ENCODE measurements at regions of chr1 and their contacts with region 1.

Region 1: GRCh38 chr1:61077676-61078541 is 4.5 kb upstream of the NFIA start:
- DNase-seq: peak; percentile 90 to 98 (median 96)
- ATAC-seq: peak; percentile 82 to 86 (median 84)
- H3K4me3 ChIP-seq: peak overlapping the region; percentile 44 to 81 (median 64)
- H3K27ac ChIP-seq: peak overlapping the region; percentile 75 to 98 (median 94)
- H3K4me1 ChIP-seq: peaks cover 12 to 47% (median 38%) of the 10 kb centered on the region in 12 donors
- H3K27me3 ChIP-seq: no peaks in the 10 kb centered on the region
- CTCF ChIP-seq: peak in 2 of 12 donors; percentile 8 to 15
- POLR2A ChIP-seq: peak in 1 of 2 donors; percentile 31

Region 2: DNA sequence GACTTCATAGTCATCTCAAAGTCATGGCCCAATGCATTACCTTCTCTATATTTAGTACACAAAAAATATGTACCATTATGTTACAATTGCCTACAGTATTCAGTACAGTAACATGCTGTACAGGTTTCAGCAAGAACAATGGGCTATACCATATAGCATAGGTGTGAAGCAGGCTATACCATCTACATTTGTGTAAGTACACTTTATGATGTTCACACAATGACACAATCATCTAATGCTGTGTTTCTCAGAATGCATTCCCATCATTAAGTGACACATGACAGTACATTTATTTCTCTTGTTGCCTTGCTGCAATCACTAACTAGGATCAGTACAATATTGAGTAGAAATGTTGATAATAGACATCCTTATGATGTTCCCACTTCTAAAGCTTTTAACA is 42.0 kb before region 1 on chr1:
- intact Hi-C with region 1: no loop called
- DNase-seq: no peak
- ATAC-seq: no peak
- H3K4me3 ChIP-seq: no peak overlapping the region
- H3K27ac ChIP-seq: no peak overlapping the region
- H3K4me1 ChIP-seq: no peaks in the 10 kb centered on the region
- H3K27me3 ChIP-seq: no peaks in the 10 kb centered on the region
- CTCF ChIP-seq: no peak
- POLR2A ChIP-seq: no peak

Region 3: DNA sequence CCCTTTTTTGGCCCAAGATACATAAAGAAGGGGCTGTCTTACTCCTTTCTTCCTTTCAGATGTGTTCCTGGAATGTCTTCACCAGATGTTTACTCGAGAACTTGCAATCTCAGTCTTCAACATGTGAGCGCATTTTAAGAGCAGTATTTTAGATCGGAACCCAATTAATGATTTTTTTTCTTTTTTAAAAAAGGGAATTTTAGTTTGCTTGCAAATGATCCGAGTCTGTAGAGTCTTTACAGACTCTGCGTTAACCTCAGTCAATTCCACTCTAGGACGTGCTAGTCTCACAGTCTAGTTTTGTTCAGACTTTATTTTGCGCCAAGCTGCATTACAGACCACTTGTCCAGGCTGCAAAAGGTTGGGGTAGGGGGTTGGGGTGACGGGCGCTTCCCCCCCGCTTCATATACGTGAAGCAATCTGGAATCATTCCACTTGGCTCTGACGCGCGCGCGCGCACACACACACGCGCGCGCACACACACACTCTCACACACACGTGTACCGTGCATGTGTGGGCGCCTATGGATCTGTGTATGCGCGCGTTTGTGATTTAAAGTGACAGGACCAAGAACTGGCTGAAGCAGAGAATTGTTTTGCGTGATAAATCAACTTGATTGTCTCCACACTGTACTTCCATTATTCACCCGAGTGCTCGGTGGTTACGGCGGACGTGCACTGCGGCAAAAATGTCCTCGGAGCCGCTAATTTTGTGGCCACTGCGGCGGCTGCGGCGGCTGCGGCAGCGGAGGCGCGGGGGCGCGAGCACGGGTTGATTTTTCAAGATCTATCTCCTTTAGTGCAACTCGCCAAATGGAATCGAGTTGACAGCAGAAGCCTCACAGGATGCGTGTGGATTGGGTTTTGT is 21.1 kb before region 1 on chr1:
- intact Hi-C with region 1: loop called in 7 of 10 experiments (anchors 1 to 2 kb)
- DNase-seq: peak; percentile 55 to 78 (median 61)
- ATAC-seq: peak; percentile 30 to 69 (median 61)
- H3K4me3 ChIP-seq: peak overlapping the region; percentile 38 to 92 (median 72)
- H3K27ac ChIP-seq: peak overlapping the region; percentile 68 to 99 (median 92)
- H3K4me1 ChIP-seq: peaks cover 0 to 57% (median 34%) of the 10 kb centered on the region in 12 donors
- H3K27me3 ChIP-seq: peaks cover 0 to 5% (median 0%) of the 10 kb centered on the region in 9 donors
- CTCF ChIP-seq: no peak
- POLR2A ChIP-seq: no peak

Region 4: DNA sequence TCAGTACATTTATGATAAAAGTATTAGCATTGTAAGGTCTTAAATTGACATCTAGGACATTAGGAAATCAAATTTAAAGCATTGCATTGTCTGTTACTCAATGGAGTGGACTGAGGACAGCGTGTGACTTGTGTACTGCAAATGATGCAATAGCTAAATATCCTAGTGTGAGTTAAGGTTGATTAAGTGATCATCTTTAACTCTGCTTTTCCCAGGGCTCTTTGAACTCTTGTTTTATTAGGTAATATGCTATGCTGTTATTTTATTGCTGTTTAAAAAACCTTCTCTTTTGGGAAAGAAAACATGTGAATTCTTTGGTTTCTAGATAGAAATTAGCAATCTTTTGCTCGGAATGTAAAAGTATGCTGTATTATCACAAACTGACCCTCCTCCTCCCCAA is 43.1 kb after region 1 on chr1:
- intact Hi-C with region 1: loop called in 5 of 10 experiments (anchors 2 to 5 kb)
- DNase-seq: no peak
- ATAC-seq: peak; percentile 67 to 80 (median 77)
- H3K4me3 ChIP-seq: peak overlapping the region in 9 of 12 donors; percentile 20 to 45 (median 27)
- H3K27ac ChIP-seq: peak overlapping the region; percentile 24 to 78 (median 70)
- H3K4me1 ChIP-seq: peaks cover 14 to 95% (median 70%) of the 10 kb centered on the region in 12 donors
- H3K27me3 ChIP-seq: no peaks in the 10 kb centered on the region
- CTCF ChIP-seq: no peak
- POLR2A ChIP-seq: no peak

Region 5: DNA sequence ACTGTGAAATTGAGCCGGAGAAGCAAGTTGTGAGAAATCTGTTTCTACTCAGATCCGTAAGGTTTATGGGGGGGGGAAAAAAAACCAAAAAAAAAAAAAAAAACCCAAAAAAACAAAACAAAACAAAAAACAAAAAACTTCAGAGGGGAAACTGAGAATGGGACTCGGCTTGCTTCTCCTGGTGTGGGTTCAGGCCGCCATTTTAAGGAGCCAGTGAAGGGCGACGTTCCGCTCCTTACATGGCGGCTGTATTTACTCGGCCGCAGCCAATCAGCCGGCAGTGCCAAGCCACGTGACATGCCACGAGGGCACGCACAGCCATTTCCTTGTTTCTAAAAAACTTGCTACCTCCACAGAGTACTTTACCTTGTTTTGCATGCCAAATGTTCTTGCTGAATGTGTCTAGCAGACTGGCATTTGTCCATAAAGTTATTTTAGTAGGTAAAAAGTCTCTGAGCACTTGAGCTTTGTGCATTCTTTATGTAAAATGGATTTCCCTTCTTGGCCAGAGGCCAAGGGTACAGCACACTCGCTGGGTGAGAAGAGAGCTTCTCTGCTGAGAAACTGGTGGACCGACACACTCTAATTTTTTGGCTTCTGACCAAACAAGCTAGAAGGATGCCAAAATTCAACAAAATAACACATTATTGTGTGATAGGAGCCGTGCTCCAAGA is 106.3 kb after region 1 on chr1:
- intact Hi-C with region 1: loop called in 7 of 10 experiments (anchors 2 to 5 kb)
- DNase-seq: peak; percentile 92 to 96 (median 93)
- ATAC-seq: peak; percentile 92 to 96 (median 94)
- H3K4me3 ChIP-seq: peak overlapping the region in 11 of 12 donors; percentile 24 to 53 (median 42)
- H3K27ac ChIP-seq: peak overlapping the region; percentile 66 to 94 (median 88)
- H3K4me1 ChIP-seq: peaks cover 23 to 76% (median 58%) of the 10 kb centered on the region in 12 donors
- H3K27me3 ChIP-seq: no peaks in the 10 kb centered on the region
- CTCF ChIP-seq: no peak
- POLR2A ChIP-seq: no peak

Region 6: DNA sequence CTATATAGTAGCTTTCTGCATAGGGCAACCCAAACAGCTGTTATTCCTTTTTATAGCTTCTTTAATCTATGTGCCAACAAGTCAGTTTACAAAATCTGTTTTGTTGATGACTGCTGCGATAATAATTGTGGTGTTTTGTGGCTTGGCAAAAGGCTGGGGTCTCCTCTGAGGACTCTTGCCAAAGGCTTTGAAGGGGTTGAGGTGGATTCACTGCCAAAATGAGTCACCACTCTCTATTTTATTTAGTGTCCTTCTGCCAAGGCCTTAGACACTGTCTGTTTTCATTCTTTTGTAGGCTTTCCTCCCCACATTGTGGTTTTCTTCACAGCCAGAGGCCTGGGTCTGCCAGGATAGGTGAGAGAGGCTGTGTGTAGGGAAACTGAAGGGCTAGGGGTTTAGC is 166.2 kb after region 1 on chr1:
- intact Hi-C with region 1: loop called in 2 of 10 experiments (anchors 10 kb)
- DNase-seq: no peak
- ATAC-seq: peak in 3 of 4 donors; percentile 27 to 53 (median 51)
- H3K4me3 ChIP-seq: no peak overlapping the region
- H3K27ac ChIP-seq: peak overlapping the region in 9 of 12 donors; percentile 5 to 68 (median 34)
- H3K4me1 ChIP-seq: peaks cover 0 to 69% (median 50%) of the 10 kb centered on the region in 12 donors
- H3K27me3 ChIP-seq: no peaks in the 10 kb centered on the region
- CTCF ChIP-seq: no peak
- POLR2A ChIP-seq: no peak

Region 7: DNA sequence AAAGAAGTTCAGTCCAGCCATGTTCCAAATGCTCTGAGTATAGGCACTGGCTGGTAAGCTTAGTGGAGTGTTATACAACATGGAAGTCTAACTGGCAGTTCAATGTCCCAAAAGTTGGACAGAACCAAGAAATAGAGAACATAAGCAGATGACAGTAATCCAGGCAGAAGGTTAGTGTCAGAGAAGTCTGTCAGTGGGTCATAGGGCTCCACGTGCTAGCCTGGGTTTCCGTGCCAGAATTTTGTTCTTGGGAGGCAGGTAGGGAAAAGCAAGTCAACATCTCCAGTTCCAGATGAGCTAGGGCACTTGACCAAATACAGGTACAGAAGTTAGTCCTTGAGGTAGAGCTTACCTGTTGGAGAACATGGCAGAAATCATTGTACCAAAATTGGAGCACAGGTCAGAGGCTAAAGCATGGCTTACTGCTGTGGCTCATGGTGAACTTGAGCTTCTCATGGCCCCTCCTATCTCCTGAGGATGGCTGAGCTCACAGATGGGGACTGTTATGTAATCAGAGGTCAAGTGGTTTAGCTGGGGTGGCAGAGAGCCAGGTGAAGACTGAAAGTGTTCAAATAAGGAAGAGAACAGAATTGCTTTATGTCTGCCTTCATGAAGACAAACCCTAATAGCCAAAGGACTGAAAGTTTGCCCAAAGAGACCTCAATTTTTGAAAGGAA is 175.3 kb after region 1 on chr1:
- intact Hi-C with region 1: loop called in 4 of 10 experiments (anchors 10 kb)
- DNase-seq: peak in 4 of 5 donors; percentile 76 to 88 (median 80)
- ATAC-seq: peak; percentile 53 to 84 (median 76)
- H3K4me3 ChIP-seq: no peak overlapping the region
- H3K27ac ChIP-seq: peak overlapping the region in 11 of 12 donors; percentile 35 to 80 (median 74)
- H3K4me1 ChIP-seq: peaks cover 6 to 78% (median 42%) of the 10 kb centered on the region in 12 donors
- H3K27me3 ChIP-seq: no peaks in the 10 kb centered on the region
- CTCF ChIP-seq: no peak
- POLR2A ChIP-seq: no peak

Region 8: DNA sequence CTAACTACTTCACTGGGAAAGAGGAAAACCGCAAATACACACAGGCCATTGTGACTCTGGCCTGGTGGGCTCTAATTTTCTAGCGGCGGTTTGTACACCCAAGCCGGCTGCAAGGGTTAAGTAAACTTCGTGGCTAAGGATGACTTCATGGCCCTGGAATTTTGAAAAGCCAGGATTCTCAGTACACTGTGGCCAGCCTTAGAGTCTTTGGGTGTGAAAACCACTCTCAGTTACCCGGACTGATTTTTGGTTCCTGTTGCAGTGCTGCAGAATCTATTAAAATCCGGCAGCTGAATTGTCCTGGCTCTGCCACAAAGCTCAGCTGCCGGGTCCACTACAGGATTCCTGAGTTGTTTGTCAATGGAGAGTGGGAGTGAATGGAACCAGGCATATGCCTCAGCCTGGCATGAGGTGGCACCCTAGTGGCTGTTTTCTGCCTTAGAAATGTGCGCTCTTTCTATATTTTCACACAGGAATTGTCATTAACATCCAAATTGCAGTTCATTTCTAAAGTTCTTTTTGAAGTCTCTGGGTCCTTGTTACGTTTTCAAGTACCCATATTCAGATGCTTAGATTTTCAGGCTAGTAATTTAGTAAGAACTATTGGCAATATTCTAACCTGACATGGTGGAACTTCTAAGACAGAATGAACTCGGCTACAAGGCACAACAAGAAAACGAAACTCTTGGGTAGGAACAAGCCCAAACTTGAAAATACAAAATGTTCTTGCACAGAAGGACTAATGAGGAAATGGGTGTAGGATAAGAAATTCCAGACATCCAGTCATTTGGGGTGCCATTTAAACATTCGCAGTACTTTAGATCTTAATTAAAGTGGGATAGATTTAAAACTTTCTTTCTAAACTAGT is 260.3 kb after region 1 on chr1:
- intact Hi-C with region 1: loop called in 9 of 10 experiments (anchors 1 to 10 kb)
- DNase-seq: peak in 4 of 5 donors; percentile 62 to 74 (median 72)
- ATAC-seq: peak; percentile 84 to 90 (median 87)
- H3K4me3 ChIP-seq: peak overlapping the region in 9 of 12 donors; percentile 3 to 45 (median 14)
- H3K27ac ChIP-seq: peak overlapping the region; percentile 42 to 86 (median 70)
- H3K4me1 ChIP-seq: peaks cover 2 to 56% (median 35%) of the 10 kb centered on the region in 12 donors
- H3K27me3 ChIP-seq: no peaks in the 10 kb centered on the region
- CTCF ChIP-seq: peak; percentile 48 to 76 (median 66)
- POLR2A ChIP-seq: no peak

Measured in heart left ventricle (tissue), 16 donors.